GM12878 (cell line): ENCODE measurements at regions of chr16 and their contacts with region 1.

Region 1: DNA sequence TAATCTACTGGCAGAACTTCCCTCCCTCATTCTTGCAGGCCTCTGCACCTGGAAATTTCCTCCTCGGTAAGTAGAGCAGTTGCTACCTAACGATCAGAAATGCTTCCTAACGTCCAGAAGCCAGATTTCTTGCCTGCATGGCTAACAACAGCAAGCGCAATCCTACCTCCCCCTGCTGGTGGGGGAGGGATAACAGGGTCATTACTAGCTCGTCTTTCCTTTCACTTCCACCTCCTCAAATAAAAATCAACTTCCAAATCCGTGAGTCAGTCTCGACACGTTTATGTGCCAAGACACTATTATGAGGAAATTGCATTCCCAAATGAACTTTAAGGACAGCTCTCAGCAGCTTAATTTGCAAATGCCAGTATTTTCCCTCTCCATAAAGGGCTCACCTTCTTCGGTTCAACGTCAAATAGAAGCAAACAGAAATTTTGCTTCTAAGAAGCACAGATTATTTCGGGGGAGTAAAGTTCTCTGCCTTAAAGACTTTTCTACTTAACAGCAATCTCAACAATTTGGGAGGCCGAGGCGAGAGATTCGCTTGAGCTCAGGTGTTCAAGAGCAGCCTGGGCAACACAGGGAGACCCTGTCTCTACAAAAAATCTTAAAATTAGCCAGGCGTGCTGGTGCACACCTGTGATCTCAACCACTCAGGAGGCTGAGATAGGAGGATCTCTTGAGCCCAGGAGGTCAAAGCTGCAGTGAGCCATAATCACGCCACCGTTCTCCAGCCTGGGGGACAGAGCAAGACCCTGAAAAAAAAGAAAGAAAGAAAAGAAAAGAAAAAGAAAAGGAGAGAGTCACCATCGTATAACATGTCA is 188.6 kb upstream of the PSMD7 start:
- DNase-seq: peak; percentile 16
- ATAC-seq: peak; percentile 89
- H3K4me3 ChIP-seq: no peak overlapping the region
- H3K27ac ChIP-seq: no peak overlapping the region
- H3K4me1 ChIP-seq: no peaks in the 10 kb centered on the region
- H3K27me3 ChIP-seq: no peaks in the 10 kb centered on the region
- CTCF ChIP-seq: peak; percentile 63 to 80 (median 75)
- EP300 ChIP-seq: no peak
- POLR2A ChIP-seq: no peak
- RAD21 ChIP-seq: 0 out of 2 replicates have a peak, but pooled peaks have one; percentile 28

Region 2: DNA sequence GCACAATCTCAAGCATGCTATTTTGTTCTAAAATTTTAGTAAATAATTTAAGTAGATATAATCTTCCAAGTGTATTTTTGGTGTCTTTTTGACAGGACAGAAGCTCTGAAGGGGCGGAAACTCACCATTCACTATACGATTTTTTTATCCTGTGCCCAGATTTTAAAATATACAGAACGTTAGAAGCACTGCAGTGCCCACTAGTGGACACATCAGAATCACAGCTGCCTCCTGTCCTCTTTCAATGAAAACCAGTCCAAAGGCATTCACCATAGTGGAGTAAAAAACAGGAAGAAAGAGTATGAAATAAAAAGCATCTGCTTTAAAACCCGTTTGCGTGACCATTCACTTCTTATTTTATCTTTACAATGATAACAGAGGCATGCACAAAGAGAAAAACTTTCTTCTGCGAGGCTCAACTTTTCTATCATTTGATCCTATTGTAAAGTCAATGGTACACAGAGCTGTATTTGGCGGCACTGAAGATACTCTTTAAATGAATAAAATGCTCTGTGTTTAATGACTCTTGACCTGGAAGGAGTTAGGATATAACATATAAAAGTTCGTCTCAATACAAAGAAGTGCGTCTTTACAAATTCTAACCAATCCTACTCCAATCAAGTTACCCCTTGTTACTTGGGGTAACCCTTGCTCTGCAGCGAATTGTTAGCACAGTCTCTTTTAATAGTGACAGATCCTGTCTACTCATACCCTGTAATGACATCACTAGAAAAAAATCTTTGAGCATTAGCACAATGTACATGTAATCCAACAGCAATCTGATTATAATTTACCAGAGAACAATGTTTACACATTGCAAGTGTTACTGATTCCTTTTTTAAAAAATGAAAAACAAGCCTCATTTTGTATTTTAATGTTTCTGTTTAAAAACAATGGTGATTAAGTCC is 151.2 kb before region 1 on chr16:
- CTCF ChIA-PET with region 1: interaction called, 4 read pairs
- POLR2A ChIA-PET with region 1: no interaction called
- RAD21 ChIA-PET with region 1: no interaction called
- SMC1A ChIA-PET with region 1: interaction called, 4 read pairs
- in situ Hi-C with region 1: no loop called
- intact Hi-C with region 1: loop called (anchors 5 kb)
- DNase-seq: peak; percentile 2
- ATAC-seq: peak; percentile 82
- H3K4me3 ChIP-seq: no peak overlapping the region
- H3K27ac ChIP-seq: no peak overlapping the region
- H3K4me1 ChIP-seq: no peaks in the 10 kb centered on the region
- H3K27me3 ChIP-seq: no peaks in the 10 kb centered on the region
- CTCF ChIP-seq: peak; percentile 78 to 85 (median 78)
- EP300 ChIP-seq: no peak
- POLR2A ChIP-seq: no peak
- RAD21 ChIP-seq: peak; percentile 70

Region 3: GRCh38 chr16:74064120-74064735 is 43.8 kb before region 1 on chr16:
- CTCF ChIA-PET with region 1: interaction called, 85 read pairs
- POLR2A ChIA-PET with region 1: interaction called, 3 read pairs
- RAD21 ChIA-PET with region 1: interaction called, 71 read pairs
- SMC1A ChIA-PET with region 1: interaction called, 99 read pairs
- in situ Hi-C with region 1: no loop called
- intact Hi-C with region 1: loop called (anchors 1 kb)
- DNase-seq: no peak
- ATAC-seq: peak; percentile 69
- H3K4me3 ChIP-seq: no peak overlapping the region
- H3K27ac ChIP-seq: no peak overlapping the region
- H3K4me1 ChIP-seq: no peaks in the 10 kb centered on the region
- H3K27me3 ChIP-seq: no peaks in the 10 kb centered on the region
- CTCF ChIP-seq: peak in 1 of 3 experiments; percentile 39; a peak in 1 of 6 replicates
- EP300 ChIP-seq: no peak
- POLR2A ChIP-seq: no peak
- RAD21 ChIP-seq: 0 out of 2 replicates have a peak, but pooled peaks have one; percentile 15

Region 4: GRCh38 chr16:74083541-74083940 is 24.5 kb before region 1 on chr16:
- CTCF ChIA-PET with region 1: interaction called, 12 read pairs
- POLR2A ChIA-PET with region 1: no interaction called
- RAD21 ChIA-PET with region 1: interaction called, 3 read pairs
- SMC1A ChIA-PET with region 1: interaction called, 5 read pairs
- in situ Hi-C with region 1: no loop called
- intact Hi-C with region 1: no loop called
- DNase-seq: no peak
- ATAC-seq: no peak
- H3K4me3 ChIP-seq: no peak overlapping the region
- H3K27ac ChIP-seq: no peak overlapping the region
- H3K4me1 ChIP-seq: no peaks in the 10 kb centered on the region
- H3K27me3 ChIP-seq: no peaks in the 10 kb centered on the region
- CTCF ChIP-seq: no peak
- EP300 ChIP-seq: no peak
- POLR2A ChIP-seq: no peak
- RAD21 ChIP-seq: no peak

Region 5: GRCh38 chr16:74268372-74268782 is 160.4 kb after region 1 on chr16:
- CTCF ChIA-PET with region 1: no interaction called
- POLR2A ChIA-PET with region 1: no interaction called
- RAD21 ChIA-PET with region 1: no interaction called
- SMC1A ChIA-PET with region 1: no interaction called
- in situ Hi-C with region 1: no loop called
- intact Hi-C with region 1: no loop called
- DNase-seq: no peak
- ATAC-seq: no peak
- H3K4me3 ChIP-seq: no peak overlapping the region
- H3K27ac ChIP-seq: no peak overlapping the region
- H3K4me1 ChIP-seq: no peaks in the 10 kb centered on the region
- H3K27me3 ChIP-seq: peaks cover 0 to 3% of the 10 kb centered on the region in 2 experiments; a peak in 1 of 4 replicates
- CTCF ChIP-seq: no peak
- EP300 ChIP-seq: no peak
- POLR2A ChIP-seq: no peak
- RAD21 ChIP-seq: no peak